ENCODE measurements at regions of chr22 and their contacts with region 1.

Region 1: DNA sequence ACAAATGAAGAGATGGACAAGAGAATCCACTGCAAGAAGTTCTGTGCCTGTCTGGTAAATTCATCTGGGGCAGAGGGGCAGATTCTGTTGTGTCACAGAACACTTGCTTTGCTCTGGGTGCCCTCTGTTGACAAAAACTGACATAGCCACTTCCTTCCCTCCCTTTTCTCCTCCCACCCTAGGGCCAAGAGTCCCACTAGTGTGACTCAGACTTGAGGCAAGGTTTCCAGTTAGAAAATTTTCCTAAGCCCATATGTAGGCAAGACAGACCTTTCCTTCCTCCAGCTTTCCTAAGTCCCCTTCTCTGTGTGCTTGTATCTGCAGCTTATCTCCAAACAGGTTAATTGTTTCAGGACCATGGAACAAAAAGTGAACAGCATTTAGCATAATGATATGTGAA is 106.8 kb downstream of the RBFOX2 start:
- DNase-seq: peak in 1 of 2 donors; percentile 58
- ATAC-seq: peak in 2 of 3 donors; percentile 68 to 74
- H3K4me3 ChIP-seq: no peak overlapping the region
- H3K4me3 Mint-ChIP-seq: no peak overlapping the region
- H3K27ac ChIP-seq: no peak overlapping the region
- H3K27ac Mint-ChIP-seq: no peak overlapping the region
- H3K4me1 ChIP-seq: no peaks in the 10 kb centered on the region
- H3K4me1 Mint-ChIP-seq: no peaks in the 10 kb centered on the region
- H3K27me3 ChIP-seq: peaks cover 2% of the 10 kb centered on the region
- H3K27me3 Mint-ChIP-seq: peaks cover 0 to 3% of the 10 kb centered on the region in 2 donors
- CTCF ChIP-seq: peak; percentile 50

Region 2: DNA sequence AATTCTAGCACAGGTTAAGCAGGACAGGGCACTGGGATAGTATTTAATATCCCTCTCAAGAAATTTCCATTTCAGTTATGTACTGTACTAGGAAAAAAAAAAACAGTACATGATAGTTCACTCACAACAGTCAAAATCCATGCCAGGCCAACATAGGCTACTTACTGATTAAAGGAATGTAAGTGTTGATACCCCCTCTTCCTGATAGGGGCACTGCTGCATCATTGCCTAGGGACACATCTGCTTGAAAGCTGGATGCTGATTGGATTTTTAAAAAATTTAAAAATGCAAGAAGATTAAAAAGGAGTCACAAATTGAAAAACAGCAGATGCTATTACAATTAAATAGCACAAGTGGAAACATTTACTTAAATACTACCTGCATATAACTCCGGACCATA is 160.7 kb before region 1 on chr22:
- intact Hi-C with region 1: loop called (anchors 5 kb)
- DNase-seq: no peak
- ATAC-seq: no peak
- H3K4me3 ChIP-seq: no peak overlapping the region
- H3K4me3 Mint-ChIP-seq: no peak overlapping the region
- H3K27ac ChIP-seq: no peak overlapping the region
- H3K27ac Mint-ChIP-seq: no peak overlapping the region
- H3K4me1 ChIP-seq: no peaks in the 10 kb centered on the region
- H3K4me1 Mint-ChIP-seq: no peaks in the 10 kb centered on the region
- H3K27me3 ChIP-seq: no peaks in the 10 kb centered on the region
- H3K27me3 Mint-ChIP-seq: peaks cover 0 to 18% of the 10 kb centered on the region in 2 donors
- CTCF ChIP-seq: no peak

Region 3: DNA sequence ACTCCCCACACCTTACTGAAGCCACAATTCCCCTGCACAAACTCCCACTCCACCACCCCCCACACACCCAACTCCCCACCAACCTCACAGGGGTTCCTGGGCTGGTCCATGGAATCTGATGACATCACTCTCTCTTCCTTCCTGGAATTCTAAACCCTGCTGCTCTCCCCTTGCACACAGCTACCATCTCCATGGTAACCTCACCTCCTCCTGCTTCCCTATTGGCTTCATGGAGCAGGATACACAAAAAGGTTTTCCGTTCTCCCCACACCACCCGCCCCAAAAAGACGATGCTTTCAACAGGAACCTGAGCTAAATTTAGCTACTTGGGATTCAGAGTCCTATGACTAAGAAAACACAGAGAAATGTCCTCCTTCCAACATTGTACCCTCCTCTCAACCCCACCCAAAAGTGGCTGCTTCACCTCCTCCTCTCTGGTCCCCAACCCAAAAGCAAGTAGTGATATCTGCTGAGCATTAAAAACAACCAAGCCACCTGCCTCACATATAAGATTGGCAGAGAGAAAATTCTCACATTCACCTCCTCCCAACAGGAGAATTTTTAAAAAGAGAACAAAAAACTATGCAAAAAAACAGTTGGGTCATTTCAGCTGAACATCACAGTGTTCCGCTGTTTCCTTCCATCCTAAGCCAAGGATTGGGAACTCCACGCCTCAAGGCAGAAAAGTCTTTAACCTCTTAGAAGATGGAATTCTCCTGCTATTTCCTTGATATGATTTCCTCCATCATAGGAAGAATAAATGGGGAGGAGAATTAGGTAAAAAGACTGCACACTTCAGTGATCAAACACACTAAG is 39.9 kb after region 1 on chr22:
- intact Hi-C with region 1: no loop called
- DNase-seq: no peak
- ATAC-seq: no peak
- H3K4me3 ChIP-seq: no peak overlapping the region
- H3K4me3 Mint-ChIP-seq: no peak overlapping the region
- H3K27ac ChIP-seq: no peak overlapping the region
- H3K27ac Mint-ChIP-seq: no peak overlapping the region
- H3K4me1 ChIP-seq: no peaks in the 10 kb centered on the region
- H3K4me1 Mint-ChIP-seq: no peaks in the 10 kb centered on the region
- H3K27me3 ChIP-seq: no peaks in the 10 kb centered on the region
- H3K27me3 Mint-ChIP-seq: peaks cover 15 to 20% of the 10 kb centered on the region in 2 donors
- CTCF ChIP-seq: no peak

Region 4: GRCh38 chr22:36028646-36029405 is 107.0 kb after region 1 on chr22 and contains the start of gene RBFOX2:
- intact Hi-C with region 1: no loop called
- DNase-seq: peak; percentile 45 to 69
- ATAC-seq: peak; percentile 74 to 85 (median 80)
- H3K4me3 ChIP-seq: peak within 1 kb of the TSS; percentile 35
- H3K4me3 Mint-ChIP-seq: peak within 1 kb of the TSS; percentile 87
- H3K27ac ChIP-seq: no peak within 1 kb of the TSS
- H3K27ac Mint-ChIP-seq: peak within 1 kb of the TSS in 1 of 2 donors; percentile 65
- H3K4me1 ChIP-seq: peaks cover 9% of the 10 kb centered on the region
- H3K4me1 Mint-ChIP-seq: peaks cover 16% of the 10 kb centered on the region in 2 donors
- H3K27me3 ChIP-seq: peaks cover 5% of the 10 kb centered on the region
- H3K27me3 Mint-ChIP-seq: peaks cover 19 to 22% of the 10 kb centered on the region in 2 donors
- CTCF ChIP-seq: no peak
- total RNA-seq, gene RBFOX2: 1.0 to 4.7 (median 3.0) TPM

Measured in natural killer cell (primary cell).